ENCODE measurements at regions of chr11 and their contacts with region 1.

Region 1: DNA sequence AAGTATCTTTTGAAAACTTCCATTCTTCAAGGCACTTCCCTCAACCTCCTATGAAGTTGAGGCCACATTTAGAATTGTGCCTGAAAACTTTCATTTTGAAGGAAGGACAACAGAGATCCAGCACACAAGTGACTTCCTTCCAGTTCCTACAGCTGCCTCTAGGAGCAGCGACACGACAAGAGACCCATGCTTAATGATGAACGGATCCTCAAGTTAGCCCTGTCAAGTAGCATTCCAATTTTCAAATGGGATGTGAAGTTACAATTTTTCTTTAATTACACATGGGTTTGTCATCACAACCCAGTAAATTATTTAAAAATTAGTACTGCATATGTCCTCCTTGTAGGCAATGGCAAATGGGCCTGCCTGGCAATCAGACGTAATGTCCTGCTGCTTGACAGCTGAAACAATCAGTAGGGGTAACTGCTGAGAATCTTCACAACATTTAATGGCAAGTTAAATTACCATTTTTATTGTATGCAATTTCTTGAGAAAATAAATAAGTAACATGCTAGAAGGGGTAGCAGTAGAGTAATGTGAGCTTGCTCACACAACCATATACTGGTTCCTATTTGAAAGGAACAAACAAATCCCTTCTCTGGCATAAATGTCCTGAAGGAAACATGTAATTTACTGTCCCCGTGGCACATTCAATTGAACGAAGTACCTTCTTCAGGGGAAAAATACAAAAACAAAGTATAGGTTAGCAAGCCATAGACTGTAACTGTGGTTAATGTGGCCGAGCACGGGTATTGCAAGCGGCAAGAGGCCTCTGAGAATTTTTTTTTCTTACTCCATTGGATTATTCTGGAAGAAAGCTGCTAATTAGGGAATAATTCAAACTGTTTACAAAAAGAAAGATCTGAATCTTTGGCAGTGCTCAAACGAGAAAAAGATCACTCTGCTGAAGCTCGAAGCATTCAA is 288.3 kb downstream of the CADM1 start:
- DNase-seq: no peak
- H3K4me3 ChIP-seq: no peak overlapping the region
- H3K27ac ChIP-seq: no peak overlapping the region
- H3K4me1 ChIP-seq: peaks cover 2% of the 10 kb centered on the region
- H3K27me3 ChIP-seq: no peaks in the 10 kb centered on the region
- CTCF ChIP-seq: no peak
- EP300 ChIP-seq: no peak
- POLR2A ChIP-seq: no peak

Region 2: GRCh38 chr11:115197433-115197832 is 18.5 kb before region 1 on chr11:
- intact Hi-C with region 1: loop called in 1 of 4 experiments (anchors 2 kb)
- DNase-seq: no peak
- H3K4me3 ChIP-seq: no peak overlapping the region
- H3K27ac ChIP-seq: no peak overlapping the region
- H3K4me1 ChIP-seq: no peaks in the 10 kb centered on the region
- H3K27me3 ChIP-seq: no peaks in the 10 kb centered on the region
- CTCF ChIP-seq: no peak
- EP300 ChIP-seq: no peak
- POLR2A ChIP-seq: no peak

Region 3: GRCh38 chr11:115396533-115396932 is 180.6 kb after region 1 on chr11:
- intact Hi-C with region 1: loop called in 1 of 4 experiments (anchors 5 kb)
- DNase-seq: no peak
- H3K4me3 ChIP-seq: no peak overlapping the region
- H3K27ac ChIP-seq: no peak overlapping the region
- H3K4me1 ChIP-seq: no peaks in the 10 kb centered on the region
- H3K27me3 ChIP-seq: no peaks in the 10 kb centered on the region
- CTCF ChIP-seq: no peak
- EP300 ChIP-seq: no peak
- POLR2A ChIP-seq: no peak

Measured in ovary (tissue), 10 donors.